ENCODE measurements at regions of chr9 and their contacts with region 1.

Region 1: DNA sequence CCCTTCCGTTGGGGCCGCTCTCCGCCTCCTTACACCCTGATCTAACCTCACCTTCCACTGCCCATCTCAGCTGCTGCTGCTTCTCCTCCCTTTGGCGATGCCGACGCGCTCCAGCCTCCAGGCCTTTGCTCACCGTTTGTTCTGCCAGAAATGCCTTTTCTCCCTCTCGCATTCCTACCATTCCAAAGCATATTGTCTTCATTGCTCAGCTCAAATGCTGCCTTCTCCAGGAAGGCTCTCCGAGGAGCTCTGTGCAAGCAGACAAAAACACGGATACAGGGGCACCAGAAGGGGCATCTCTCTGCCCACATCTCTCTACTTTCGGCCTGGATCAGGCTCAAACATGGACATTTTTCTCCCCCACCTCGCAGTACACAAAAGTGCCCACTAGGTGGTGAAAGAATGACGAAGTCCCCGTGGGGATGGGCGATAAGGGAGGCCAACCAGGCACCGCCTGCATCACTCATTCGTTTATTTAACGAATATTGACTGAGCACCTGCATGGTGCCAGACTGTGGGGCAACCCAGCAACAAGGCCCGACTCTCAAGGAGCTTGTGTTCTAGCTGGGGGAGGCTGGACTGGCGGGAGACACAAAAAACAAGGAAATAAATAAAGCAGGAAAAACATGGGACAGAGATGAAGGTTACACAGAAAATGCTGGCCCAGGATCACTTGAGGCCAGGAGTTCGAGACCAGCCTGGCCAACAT is 7.3 kb upstream of the GRHPR start:
- DNase-seq: peak; percentile 85 to 90
- H3K4me3 ChIP-seq: no peak overlapping the region
- H3K4me3 Mint-ChIP-seq: peak overlapping the region; percentile 65
- H3K27ac Mint-ChIP-seq: peak overlapping the region; percentile 87
- H3K4me1 ChIP-seq: peaks cover 40% of the 10 kb centered on the region
- H3K4me1 Mint-ChIP-seq: peaks cover 35% of the 10 kb centered on the region
- H3K27me3 ChIP-seq: no peaks in the 10 kb centered on the region
- H3K27me3 Mint-ChIP-seq: no peaks in the 10 kb centered on the region
- CTCF ChIP-seq: peak; percentile 68 to 88

Region 2: GRCh38 chr9:36913393-36914211 is 501.6 kb before region 1 on chr9:
- CTCF ChIA-PET with region 1: no interaction called
- POLR2A ChIA-PET with region 1: no interaction called
- intact Hi-C with region 1: loop called (anchors 5 kb)
- DNase-seq: no peak
- H3K4me3 ChIP-seq: no peak overlapping the region
- H3K4me3 Mint-ChIP-seq: no peak overlapping the region
- H3K27ac Mint-ChIP-seq: no peak overlapping the region
- H3K4me1 ChIP-seq: no peaks in the 10 kb centered on the region
- H3K4me1 Mint-ChIP-seq: no peaks in the 10 kb centered on the region
- H3K27me3 ChIP-seq: no peaks in the 10 kb centered on the region
- H3K27me3 Mint-ChIP-seq: peaks cover 4% of the 10 kb centered on the region
- CTCF ChIP-seq: peak; percentile 11 to 34

Region 3: GRCh38 chr9:37364751-37365360 is 50.3 kb before region 1 on chr9:
- CTCF ChIA-PET with region 1: no interaction called
- POLR2A ChIA-PET with region 1: no interaction called
- intact Hi-C with region 1: loop called (anchors 1 kb)
- DNase-seq: no peak
- H3K4me3 ChIP-seq: no peak overlapping the region
- H3K4me3 Mint-ChIP-seq: no peak overlapping the region
- H3K27ac Mint-ChIP-seq: no peak overlapping the region
- H3K4me1 ChIP-seq: peaks cover 8% of the 10 kb centered on the region
- H3K4me1 Mint-ChIP-seq: peaks cover 10% of the 10 kb centered on the region
- H3K27me3 ChIP-seq: no peaks in the 10 kb centered on the region
- H3K27me3 Mint-ChIP-seq: no peaks in the 10 kb centered on the region
- CTCF ChIP-seq: no peak

Region 4: GRCh38 chr9:37430841-37431597 is 15.9 kb after region 1 on chr9:
- CTCF ChIA-PET with region 1: no interaction called
- POLR2A ChIA-PET with region 1: no interaction called
- intact Hi-C with region 1: loop called (anchors 2 kb)
- DNase-seq: peak; percentile 55 to 56
- H3K4me3 ChIP-seq: no peak overlapping the region
- H3K4me3 Mint-ChIP-seq: no peak overlapping the region
- H3K27ac Mint-ChIP-seq: no peak overlapping the region
- H3K4me1 ChIP-seq: peaks cover 7% of the 10 kb centered on the region; the same call in 1 of the 2 replicates
- H3K4me1 Mint-ChIP-seq: no peaks in the 10 kb centered on the region
- H3K27me3 ChIP-seq: no peaks in the 10 kb centered on the region
- H3K27me3 Mint-ChIP-seq: no peaks in the 10 kb centered on the region
- CTCF ChIP-seq: peak in 1 of 2 experiments; percentile 32

Region 5: GRCh38 chr9:37465249-37466036 is 50.3 kb after region 1 on chr9 and contains the start of gene ZBTB5:
- CTCF ChIA-PET with region 1: no interaction called
- POLR2A ChIA-PET with region 1: interaction called, 4 read pairs
- intact Hi-C with region 1: loop called (anchors 2 kb)
- DNase-seq: peak; percentile 99
- H3K4me3 ChIP-seq: peak within 1 kb of the TSS; percentile 89
- H3K4me3 Mint-ChIP-seq: peak within 1 kb of the TSS; percentile 95
- H3K27ac Mint-ChIP-seq: peak within 1 kb of the TSS; percentile 96
- H3K4me1 ChIP-seq: peaks cover 12% of the 10 kb centered on the region
- H3K4me1 Mint-ChIP-seq: peaks cover 21% of the 10 kb centered on the region
- H3K27me3 ChIP-seq: no peaks in the 10 kb centered on the region
- H3K27me3 Mint-ChIP-seq: no peaks in the 10 kb centered on the region
- CTCF ChIP-seq: no peak
- total RNA-seq, gene ZBTB5: 12.5 and 13.2 TPM in 2 replicates

Region 6: DNA sequence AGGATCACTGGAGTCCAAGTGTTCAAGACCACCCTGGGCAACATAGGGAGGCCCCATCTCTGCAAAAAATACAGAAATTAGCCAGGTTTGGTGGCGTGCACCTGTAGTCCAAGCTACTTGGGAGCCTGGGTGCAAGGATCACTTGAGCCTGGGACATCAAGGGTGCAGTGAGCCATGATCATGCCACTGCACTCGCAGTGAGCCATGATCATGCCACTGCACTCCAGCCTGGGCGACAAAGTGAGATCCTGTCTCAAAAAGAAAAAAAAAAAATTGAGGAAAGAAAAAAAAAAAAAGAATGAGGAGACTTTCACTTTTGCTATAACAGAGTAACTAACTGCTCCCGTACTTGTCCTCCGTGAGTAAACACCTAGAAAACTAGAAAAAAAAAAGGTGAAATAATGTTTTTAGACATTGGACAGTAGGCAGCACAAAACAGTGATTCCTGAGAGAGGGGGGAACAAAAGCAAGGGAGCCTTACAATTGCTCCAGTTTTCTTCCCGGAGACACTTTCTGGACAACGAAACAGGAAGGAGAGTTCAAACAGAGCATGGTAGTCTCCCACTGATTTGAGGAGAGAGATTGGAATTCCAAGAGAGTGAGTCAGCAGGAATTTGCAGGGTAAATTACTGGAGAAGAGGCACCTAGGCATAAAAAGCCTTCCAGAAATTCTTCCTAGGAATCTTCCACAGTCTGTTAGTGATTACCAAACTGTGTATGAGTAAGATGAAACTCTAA is 56.9 kb after region 1 on chr9:
- CTCF ChIA-PET with region 1: no interaction called
- POLR2A ChIA-PET with region 1: interaction called, 3 read pairs
- intact Hi-C with region 1: loop called (anchors 2 kb)
- DNase-seq: peak; percentile 71 to 80
- H3K4me3 ChIP-seq: peak overlapping the region; percentile 29
- H3K4me3 Mint-ChIP-seq: peak overlapping the region; percentile 77
- H3K27ac Mint-ChIP-seq: peak overlapping the region; percentile 93
- H3K4me1 ChIP-seq: peaks cover 11% of the 10 kb centered on the region
- H3K4me1 Mint-ChIP-seq: peaks cover 17% of the 10 kb centered on the region
- H3K27me3 ChIP-seq: no peaks in the 10 kb centered on the region
- H3K27me3 Mint-ChIP-seq: no peaks in the 10 kb centered on the region
- CTCF ChIP-seq: no peak